Astrocyte of the cerebellum (primary cell): ENCODE measurements at regions of chr5 and their contacts with region 1.

Region 1: DNA sequence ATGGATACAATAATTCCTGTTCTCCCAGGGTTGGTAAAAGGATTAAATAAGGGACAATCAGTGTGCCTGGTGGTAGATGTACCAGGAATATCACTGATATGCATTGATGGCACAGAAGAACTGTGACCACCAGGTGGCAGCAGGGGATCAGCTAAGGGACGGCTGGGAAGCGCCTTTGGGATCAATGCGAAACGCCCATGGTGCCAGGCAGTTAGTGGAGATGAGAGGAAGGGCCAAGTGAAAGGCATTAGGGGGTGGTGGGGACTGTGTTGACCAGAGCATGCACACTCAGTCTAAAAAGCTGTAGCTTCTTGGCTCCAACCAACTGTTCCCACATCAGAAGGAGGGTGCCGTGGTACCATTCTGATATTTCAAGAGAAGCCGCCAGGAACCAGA is 55.6 kb downstream of the ARHGEF37 start:
- DNase-seq: peak; percentile 63
- H3K4me3 ChIP-seq: no peak overlapping the region
- CTCF ChIP-seq: peak; percentile 83

Region 2: GRCh38 chr5:149605998-149606724 is 30.7 kb before region 1 on chr5:
- in situ Hi-C with region 1: no loop called
- DNase-seq: no peak
- H3K4me3 ChIP-seq: no peak overlapping the region
- CTCF ChIP-seq: no peak

Region 3: GRCh38 chr5:149667084-149667828 is 30.4 kb after region 1 on chr5:
- in situ Hi-C with region 1: no loop called
- DNase-seq: no peak
- H3K4me3 ChIP-seq: no peak overlapping the region
- CTCF ChIP-seq: peak; percentile 76

Region 4: GRCh38 chr5:149728303-149728702 is 91.5 kb after region 1 on chr5:
- in situ Hi-C with region 1: loop called (anchors 5 kb)
- DNase-seq: peak; percentile 54
- H3K4me3 ChIP-seq: no peak overlapping the region
- CTCF ChIP-seq: no peak

Region 5: GRCh38 chr5:149990518-149991376 is 353.9 kb after region 1 on chr5:
- in situ Hi-C with region 1: loop called (anchors 25 kb)
- DNase-seq: peak; percentile 71
- H3K4me3 ChIP-seq: no peak overlapping the region
- CTCF ChIP-seq: peak; percentile 92